Thyroid gland (tissue), 4 donors: ENCODE measurements at regions of chr15 and their contacts with region 1.

Region 1: GRCh38 chr15:74540761-74541493 is at the start of gene ARID3B:
- DNase-seq: peak; percentile 98
- H3K4me3 ChIP-seq: peak within 1 kb of the TSS; percentile 37 to 88 (median 69)
- H3K27ac ChIP-seq: peak within 1 kb of the TSS in 2 of 3 donors; percentile 18 to 69
- H3K4me1 ChIP-seq: peaks cover 16 to 23% of the 10 kb centered on the region in 2 donors
- H3K27me3 ChIP-seq: no peaks in the 10 kb centered on the region
- CTCF ChIP-seq: no peak
- POLR2A ChIP-seq: peak in 1 of 2 donors; percentile 70
- total RNA-seq, gene ARID3B: 5.9 to 7.7 (median 6.2) TPM

Region 2: GRCh38 chr15:74468341-74469032 is 72.4 kb before region 1 on chr15:
- intact Hi-C with region 1: loop called (anchors 5 kb)
- DNase-seq: no peak
- H3K4me3 ChIP-seq: no peak overlapping the region
- H3K27ac ChIP-seq: no peak overlapping the region
- H3K4me1 ChIP-seq: no peaks in the 10 kb centered on the region
- H3K27me3 ChIP-seq: no peaks in the 10 kb centered on the region
- CTCF ChIP-seq: no peak
- POLR2A ChIP-seq: no peak

Region 3: GRCh38 chr15:74598126-74598842 is 57.4 kb after region 1 on chr15:
- intact Hi-C with region 1: no loop called
- DNase-seq: peak; percentile 97 to 98
- H3K4me3 ChIP-seq: peak overlapping the region in 2 of 3 donors; percentile 45 to 48
- H3K27ac ChIP-seq: peak overlapping the region; percentile 73 to 93 (median 76)
- H3K4me1 ChIP-seq: peaks cover 15 to 24% of the 10 kb centered on the region in 2 donors
- H3K27me3 ChIP-seq: no peaks in the 10 kb centered on the region
- CTCF ChIP-seq: no peak
- POLR2A ChIP-seq: peak in 1 of 2 donors; percentile 97

Region 4: DNA sequence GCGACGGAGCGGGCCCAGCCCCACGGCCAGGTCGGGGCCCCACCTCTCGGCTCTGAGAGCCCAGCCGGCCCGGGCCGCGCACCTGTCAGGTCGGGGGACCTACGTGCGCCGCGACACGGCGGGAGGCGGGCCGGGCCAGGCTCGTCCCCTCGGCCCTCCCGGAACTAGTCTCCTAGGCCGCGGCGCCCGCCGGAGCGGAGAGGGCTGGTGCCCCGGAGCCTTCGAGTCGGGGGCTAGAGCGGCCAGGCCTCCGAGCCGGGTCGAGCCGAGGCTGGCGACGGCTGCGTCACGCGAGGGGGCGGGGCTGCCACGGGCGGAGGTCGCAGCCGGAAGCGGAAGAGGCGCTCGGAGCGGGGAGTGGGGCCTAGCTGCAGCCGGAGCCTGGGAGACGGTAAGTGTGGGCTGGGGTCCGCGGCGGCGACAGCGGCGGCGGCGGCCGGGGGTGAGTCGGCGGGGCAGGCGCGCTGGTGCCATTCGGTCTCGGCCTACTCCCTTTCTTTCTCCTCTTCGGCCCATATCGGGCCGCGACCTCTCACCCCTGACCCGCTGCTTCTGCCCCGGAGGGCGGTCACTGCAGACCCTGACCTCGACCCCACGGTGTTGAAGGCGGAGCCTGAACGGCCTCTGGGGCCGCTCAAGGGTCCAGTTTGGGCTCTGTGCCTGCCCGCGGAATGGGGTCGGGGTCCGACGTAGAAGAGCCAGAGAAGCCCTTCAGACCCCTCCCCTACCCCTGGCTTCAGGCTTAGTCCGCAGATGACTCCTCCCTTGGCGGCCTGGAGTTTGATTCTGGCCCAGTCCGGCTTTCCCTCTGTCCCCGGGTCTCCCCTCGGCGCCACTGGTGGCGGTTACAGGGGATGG is 74.8 kb after region 1 on chr15 and contains the start of gene CLK3:
- intact Hi-C with region 1: loop called (anchors 5 kb)
- DNase-seq: peak; percentile 97
- H3K4me3 ChIP-seq: peak within 1 kb of the TSS; percentile 79 to 98 (median 98)
- H3K27ac ChIP-seq: peak within 1 kb of the TSS; percentile 88 to 98 (median 98)
- H3K4me1 ChIP-seq: peaks cover 17 to 19% of the 10 kb centered on the region in 2 donors
- H3K27me3 ChIP-seq: no peaks in the 10 kb centered on the region
- CTCF ChIP-seq: no peak
- POLR2A ChIP-seq: peak in 1 of 2 donors; percentile 85
- total RNA-seq, gene CLK3: 91.9 to 156 (median 120) TPM